ENCODE measurements at regions of chr17 and their contacts with region 1.

Region 1: DNA sequence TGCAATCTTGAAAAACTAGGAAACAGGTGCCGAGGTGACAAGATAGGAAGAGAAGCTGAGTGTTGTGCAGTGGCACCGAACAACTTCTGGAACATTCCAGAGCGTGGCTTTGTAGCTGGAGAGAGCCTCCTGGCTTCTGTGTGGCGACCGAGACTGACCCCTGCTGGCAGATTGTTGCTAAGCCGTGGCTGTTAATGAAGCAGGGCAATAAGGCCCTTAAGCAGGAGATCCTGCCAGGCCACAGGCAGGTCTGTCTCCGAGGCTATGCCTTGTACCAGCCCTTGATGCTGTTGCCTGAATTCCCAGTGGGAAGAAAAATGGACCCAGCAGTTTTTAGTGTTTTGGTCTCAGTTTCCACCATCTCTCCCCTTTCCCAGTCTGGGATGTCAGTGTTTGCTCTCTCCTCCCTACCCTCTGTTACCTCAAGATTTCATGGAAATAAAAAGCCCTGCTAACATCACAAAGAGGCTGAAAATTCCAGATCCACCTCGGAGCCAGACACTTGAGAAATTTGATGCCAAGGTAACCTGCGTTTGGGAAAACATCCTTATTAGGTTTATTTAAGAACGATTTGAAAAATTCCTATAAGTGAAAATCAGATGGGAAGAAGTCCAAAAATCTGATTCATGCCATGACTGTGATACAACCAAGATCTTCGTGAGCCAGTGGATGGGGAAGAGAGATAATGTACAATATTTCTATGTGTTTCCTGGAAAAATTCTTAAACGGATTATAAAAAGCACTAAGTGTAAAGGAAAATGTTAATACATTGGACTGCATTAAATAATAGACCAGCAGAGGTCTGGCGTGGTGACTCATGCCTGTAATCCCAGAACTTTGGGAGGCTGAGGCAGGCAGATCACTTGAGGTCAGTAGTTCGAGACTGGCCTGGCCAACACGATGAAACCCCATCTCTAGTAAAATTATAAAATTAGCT is 265.1 kb downstream of the PRKCA start:
- DNase-seq: peak; percentile 99
- ATAC-seq: peak; percentile 80
- H3K4me3 ChIP-seq: peak overlapping the region; percentile 16; the same call in 1 of the 2 replicates
- H3K27ac ChIP-seq: peak overlapping the region; percentile 94
- H3K4me1 ChIP-seq: peaks cover 49% of the 10 kb centered on the region
- H3K27me3 ChIP-seq: no peaks in the 10 kb centered on the region
- CTCF ChIP-seq: peak; percentile 100

Region 2: GRCh38 chr17:66200685-66201092 is 366.8 kb before region 1 on chr17:
- CTCF ChIA-PET with region 1: no interaction called
- POLR2A ChIA-PET with region 1: no interaction called
- intact Hi-C with region 1: loop called (anchors 2 kb)
- DNase-seq: peak; percentile 82
- ATAC-seq: peak; percentile 65
- H3K4me3 ChIP-seq: peak overlapping the region; percentile 4; the same call in 1 of the 2 replicates
- H3K27ac ChIP-seq: no peak overlapping the region
- H3K4me1 ChIP-seq: peaks cover 8% of the 10 kb centered on the region
- H3K27me3 ChIP-seq: no peaks in the 10 kb centered on the region
- CTCF ChIP-seq: peak; percentile 95

Region 3: DNA sequence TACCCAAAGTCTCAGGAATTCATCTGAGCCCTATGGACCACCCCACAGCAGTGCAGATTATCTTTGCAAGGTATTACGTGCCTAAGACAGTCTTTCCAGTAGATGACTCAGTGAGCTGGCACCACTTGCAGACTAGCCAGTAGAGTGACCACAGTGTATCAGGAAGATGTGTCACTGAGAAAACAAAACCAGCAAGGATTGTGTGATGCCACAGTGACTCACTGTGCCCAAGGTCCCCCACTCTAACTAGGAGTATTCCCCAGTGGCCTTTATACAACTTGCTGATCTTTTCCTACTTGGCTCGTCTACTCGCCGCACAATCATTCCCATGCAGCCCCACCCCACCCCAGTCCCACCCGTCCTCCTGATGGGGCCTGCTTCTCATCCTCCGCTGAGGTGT is 291.9 kb before region 1 on chr17:
- CTCF ChIA-PET with region 1: no interaction called
- POLR2A ChIA-PET with region 1: no interaction called
- intact Hi-C with region 1: loop called (anchors 1 kb)
- DNase-seq: peak; percentile 100
- ATAC-seq: peak; percentile 91
- H3K4me3 ChIP-seq: no peak overlapping the region; the same call in 1 of the 2 replicates
- H3K27ac ChIP-seq: peak overlapping the region; percentile 98
- H3K4me1 ChIP-seq: peaks cover 50% of the 10 kb centered on the region
- H3K27me3 ChIP-seq: no peaks in the 10 kb centered on the region
- CTCF ChIP-seq: no peak

Region 4: GRCh38 chr17:66466840-66467367 is 100.6 kb before region 1 on chr17:
- CTCF ChIA-PET with region 1: interaction called, 4 read pairs
- POLR2A ChIA-PET with region 1: no interaction called
- intact Hi-C with region 1: loop called (anchors 1 kb)
- DNase-seq: peak; percentile 99
- ATAC-seq: peak; percentile 92
- H3K4me3 ChIP-seq: peak overlapping the region; percentile 45
- H3K27ac ChIP-seq: peak overlapping the region; percentile 80
- H3K4me1 ChIP-seq: peaks cover 71% of the 10 kb centered on the region
- H3K27me3 ChIP-seq: no peaks in the 10 kb centered on the region
- CTCF ChIP-seq: no peak

Region 5: GRCh38 chr17:66523378-66524200 is 43.9 kb before region 1 on chr17:
- CTCF ChIA-PET with region 1: interaction called, 4 read pairs
- POLR2A ChIA-PET with region 1: no interaction called
- intact Hi-C with region 1: loop called (anchors 1 kb)
- DNase-seq: no peak
- ATAC-seq: peak; percentile 84
- H3K4me3 ChIP-seq: no peak overlapping the region
- H3K27ac ChIP-seq: peak overlapping the region; percentile 84
- H3K4me1 ChIP-seq: peaks cover 38% of the 10 kb centered on the region
- H3K27me3 ChIP-seq: no peaks in the 10 kb centered on the region
- CTCF ChIP-seq: peak; percentile 17; the same call in 1 of the 2 replicates

Region 6: DNA sequence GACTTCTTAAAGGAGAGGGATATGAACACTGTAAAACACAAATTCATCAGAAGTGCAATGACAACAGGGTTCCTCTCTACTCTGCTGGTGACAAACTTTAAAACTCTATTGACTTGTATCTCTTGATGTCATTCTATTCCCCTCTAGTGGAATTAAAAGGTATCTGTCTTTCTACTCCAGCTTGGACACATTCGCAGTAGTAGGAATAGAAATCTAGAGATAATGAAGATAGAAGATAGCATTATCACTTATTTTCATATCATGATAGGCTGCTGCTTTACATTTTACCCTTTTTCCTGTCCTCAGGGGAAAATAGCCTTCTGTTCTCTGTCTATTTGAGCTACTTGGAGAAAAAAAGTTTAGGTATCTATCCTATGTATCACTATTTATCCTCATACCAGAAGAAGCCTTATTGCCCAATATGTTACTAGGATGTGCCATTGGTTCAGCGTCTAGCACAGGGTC is 57.8 kb after region 1 on chr17:
- CTCF ChIA-PET with region 1: no interaction called
- POLR2A ChIA-PET with region 1: interaction called, 7 read pairs
- intact Hi-C with region 1: loop called (anchors 1 kb)
- DNase-seq: peak; percentile 73
- ATAC-seq: peak; percentile 96
- H3K4me3 ChIP-seq: no peak overlapping the region
- H3K27ac ChIP-seq: no peak overlapping the region
- H3K4me1 ChIP-seq: no peaks in the 10 kb centered on the region
- H3K27me3 ChIP-seq: no peaks in the 10 kb centered on the region
- CTCF ChIP-seq: peak; percentile 94

Measured in PC-3 (cell line).